Endothelial cell of umbilical vein (primary cell): ENCODE measurements at regions of chr6 and their contacts with region 1.

Region 1: GRCh38 chr6:45421709-45422502 is 44.2 kb upstream of the SUPT3H start:
- DNase-seq: peak; percentile 48
- H3K4me3 ChIP-seq: peak overlapping the region; percentile 24 to 44 (median 34)
- H3K27ac ChIP-seq: no peak overlapping the region
- H3K4me1 ChIP-seq: peaks cover 17% of the 10 kb centered on the region
- H3K27me3 ChIP-seq: peaks cover 63 to 96% of the 10 kb centered on the region in 2 experiments
- CTCF ChIP-seq: peak in 1 of 2 donors; percentile 28
- POLR2A ChIP-seq: no peak

Region 2: GRCh38 chr6:44593539-44593944 is 828.4 kb before region 1 on chr6:
- CTCF ChIA-PET with region 1: interaction called, 3 read pairs
- POLR2A ChIA-PET with region 1: no interaction called
- dilution Hi-C with region 1: no loop called
- intact Hi-C with region 1: loop called (anchors 1 kb)
- DNase-seq: peak; percentile 54
- H3K4me3 ChIP-seq: no peak overlapping the region
- H3K27ac ChIP-seq: no peak overlapping the region
- H3K4me1 ChIP-seq: no peaks in the 10 kb centered on the region
- H3K27me3 ChIP-seq: peaks cover 0 to 3% of the 10 kb centered on the region in 2 experiments
- CTCF ChIP-seq: peak; percentile 47 to 54
- POLR2A ChIP-seq: no peak

Region 3: GRCh38 chr6:45377554-45378333 is 44.2 kb before region 1 on chr6 and contains the start of gene SUPT3H:
- CTCF ChIA-PET with region 1: interaction called, 4 read pairs
- POLR2A ChIA-PET with region 1: interaction called, 4 read pairs
- dilution Hi-C with region 1: no loop called
- intact Hi-C with region 1: loop called (anchors 2 kb)
- DNase-seq: peak; percentile 94
- H3K4me3 ChIP-seq: peak within 1 kb of the TSS; percentile 76 to 92 (median 79)
- H3K27ac ChIP-seq: peak within 1 kb of the TSS; percentile 91
- H3K4me1 ChIP-seq: peaks cover 8% of the 10 kb centered on the region
- H3K27me3 ChIP-seq: no peaks in the 10 kb centered on the region
- CTCF ChIP-seq: peak in 1 of 2 donors; percentile 26
- POLR2A ChIP-seq: peak; percentile 87
- total RNA-seq, gene SUPT3H: 8.4 and 9.8 TPM in 2 replicates

Region 4: GRCh38 chr6:45445749-45446549 is 24.0 kb after region 1 on chr6:
- CTCF ChIA-PET with region 1: no interaction called
- POLR2A ChIA-PET with region 1: no interaction called
- dilution Hi-C with region 1: no loop called
- intact Hi-C with region 1: loop called (anchors 1 kb)
- DNase-seq: peak; percentile 99
- H3K4me3 ChIP-seq: peak overlapping the region in 1 of 3 experiments; percentile 5
- H3K27ac ChIP-seq: peak overlapping the region; percentile 68
- H3K4me1 ChIP-seq: peaks cover 33% of the 10 kb centered on the region
- H3K27me3 ChIP-seq: no peaks in the 10 kb centered on the region
- CTCF ChIP-seq: no peak
- POLR2A ChIP-seq: no peak

Region 5: GRCh38 chr6:45504947-45505346 is 83.0 kb after region 1 on chr6:
- CTCF ChIA-PET with region 1: no interaction called
- POLR2A ChIA-PET with region 1: no interaction called
- dilution Hi-C with region 1: no loop called
- intact Hi-C with region 1: loop called (anchors 5 kb)
- DNase-seq: peak; percentile 50
- H3K4me3 ChIP-seq: no peak overlapping the region
- H3K27ac ChIP-seq: no peak overlapping the region
- H3K4me1 ChIP-seq: peaks cover 5% of the 10 kb centered on the region
- H3K27me3 ChIP-seq: no peaks in the 10 kb centered on the region
- CTCF ChIP-seq: no peak
- POLR2A ChIP-seq: no peak

Region 6: GRCh38 chr6:45577836-45578504 is 156.1 kb after region 1 on chr6:
- CTCF ChIA-PET with region 1: no interaction called
- POLR2A ChIA-PET with region 1: no interaction called
- dilution Hi-C with region 1: no loop called
- intact Hi-C with region 1: loop called (anchors 5 kb)
- DNase-seq: peak; percentile 15
- H3K4me3 ChIP-seq: no peak overlapping the region
- H3K27ac ChIP-seq: no peak overlapping the region
- H3K4me1 ChIP-seq: peaks cover 7% of the 10 kb centered on the region
- H3K27me3 ChIP-seq: peaks cover 0 to 2% of the 10 kb centered on the region in 2 experiments
- CTCF ChIP-seq: no peak
- POLR2A ChIP-seq: no peak

Region 7: DNA sequence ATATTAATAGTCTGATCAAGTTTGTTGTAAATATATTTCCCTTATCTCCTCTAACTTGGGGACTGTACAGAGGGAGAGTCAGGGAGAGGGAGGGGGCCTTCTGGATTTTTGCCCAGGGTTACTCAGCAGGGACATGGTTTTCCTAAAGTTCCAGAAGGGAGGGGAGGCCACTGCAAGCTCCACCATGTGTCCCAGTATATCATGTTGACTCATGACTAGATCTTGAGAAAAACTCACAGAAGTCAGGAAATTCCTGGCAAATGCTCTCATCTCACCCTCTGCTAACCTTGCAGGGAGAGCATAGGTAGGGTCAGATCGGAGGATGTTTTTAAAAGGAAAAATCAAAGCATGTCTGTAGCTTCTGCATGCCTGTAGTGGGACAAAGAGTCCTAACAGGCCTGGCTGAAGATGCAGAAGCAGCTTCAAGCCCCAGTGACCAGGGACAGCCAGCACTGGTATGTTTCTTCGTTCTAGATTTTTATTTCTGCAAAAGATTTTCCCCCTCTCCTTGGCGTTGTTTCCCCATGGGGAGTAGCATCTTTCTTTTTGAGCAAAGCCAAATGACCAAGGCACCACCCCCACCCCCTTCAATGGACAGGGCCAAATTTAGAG is 228.7 kb after region 1 on chr6:
- CTCF ChIA-PET with region 1: no interaction called
- POLR2A ChIA-PET with region 1: no interaction called
- dilution Hi-C with region 1: no loop called
- intact Hi-C with region 1: loop called (anchors 2 kb)
- DNase-seq: peak; percentile 89
- H3K4me3 ChIP-seq: no peak overlapping the region
- H3K27ac ChIP-seq: peak overlapping the region; percentile 26
- H3K4me1 ChIP-seq: peaks cover 41% of the 10 kb centered on the region
- H3K27me3 ChIP-seq: no peaks in the 10 kb centered on the region
- CTCF ChIP-seq: no peak
- POLR2A ChIP-seq: peak; percentile 64